Gastrocnemius medialis (tissue), 4 donors: ENCODE measurements at regions of chr16 and their contacts with region 1.

Region 1: GRCh38 chr16:1019231-1020090 is 37.9 kb downstream of the SOX8 start:
- DNase-seq: peak in 1 of 2 donors; percentile 28
- ATAC-seq: peak; percentile 72
- H3K4me3 ChIP-seq: peak overlapping the region; percentile 12 to 49 (median 32)
- H3K27ac ChIP-seq: no peak overlapping the region
- H3K4me1 ChIP-seq: peaks cover 9 to 10% of the 10 kb centered on the region in 2 donors
- H3K27me3 ChIP-seq: peaks cover 25 to 62% (median 43%) of the 10 kb centered on the region in 3 donors
- CTCF ChIP-seq: no peak
- POLR2A ChIP-seq: no peak

Region 2: GRCh38 chr16:964356-965042 is 55.0 kb before region 1 on chr16:
- in situ Hi-C with region 1: no loop called
- intact Hi-C with region 1: loop called (anchors 2 kb)
- DNase-seq: peak in 1 of 2 donors; percentile 36
- ATAC-seq: peak in 1 of 2 donors; percentile 48
- H3K4me3 ChIP-seq: peak overlapping the region in 3 of 4 donors; percentile 14 to 25 (median 20)
- H3K27ac ChIP-seq: no peak overlapping the region
- H3K4me1 ChIP-seq: peaks cover 15 to 20% of the 10 kb centered on the region in 2 donors
- H3K27me3 ChIP-seq: no peaks in the 10 kb centered on the region
- CTCF ChIP-seq: no peak
- POLR2A ChIP-seq: no peak